Panc1 (cell line): ENCODE measurements at regions of chr6 and their contacts with region 1.

Region 1: GRCh38 chr6:34115403-34115795 is 30.5 kb downstream of the GRM4 start:
- DNase-seq: no peak
- ATAC-seq: no peak
- H3K4me3 ChIP-seq: no peak overlapping the region
- H3K27ac ChIP-seq: no peak overlapping the region
- H3K4me1 ChIP-seq: no peaks in the 10 kb centered on the region
- H3K27me3 ChIP-seq: peaks cover 3% of the 10 kb centered on the region
- CTCF ChIP-seq: no peak

Region 2: DNA sequence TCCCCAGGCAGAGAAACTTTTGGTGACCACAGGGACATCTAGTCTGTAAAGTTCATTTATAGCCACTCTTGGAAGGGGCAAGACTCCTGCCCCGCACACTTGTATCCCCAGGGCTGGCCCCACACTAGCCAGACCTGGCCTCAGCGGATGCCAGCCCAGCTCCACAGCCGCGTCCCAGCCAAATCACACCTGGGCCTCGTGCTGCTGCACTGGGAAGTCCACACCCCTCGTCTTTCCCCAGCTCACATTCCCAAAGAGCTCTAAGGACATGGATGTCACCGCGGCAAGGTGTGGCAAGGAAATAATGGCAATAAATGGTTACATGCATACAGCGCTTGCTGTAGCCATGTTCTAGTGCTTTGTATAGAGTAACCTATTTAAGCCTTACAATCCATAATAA is 377.2 kb before region 1 on chr6:
- CTCF ChIA-PET with region 1: interaction called, 11 read pairs
- POLR2A ChIA-PET with region 1: no interaction called
- in situ Hi-C with region 1: no loop called
- intact Hi-C with region 1: no loop called
- DNase-seq: no peak
- ATAC-seq: no peak
- H3K4me3 ChIP-seq: no peak overlapping the region
- H3K27ac ChIP-seq: no peak overlapping the region
- H3K4me1 ChIP-seq: no peaks in the 10 kb centered on the region
- H3K27me3 ChIP-seq: no peaks in the 10 kb centered on the region
- CTCF ChIP-seq: no peak

Region 3: GRCh38 chr6:34094474-34095135 is 20.8 kb before region 1 on chr6:
- CTCF ChIA-PET with region 1: no interaction called
- POLR2A ChIA-PET with region 1: no interaction called
- in situ Hi-C with region 1: no loop called
- intact Hi-C with region 1: no loop called
- DNase-seq: no peak
- ATAC-seq: no peak
- H3K4me3 ChIP-seq: no peak overlapping the region
- H3K27ac ChIP-seq: no peak overlapping the region
- H3K4me1 ChIP-seq: no peaks in the 10 kb centered on the region
- H3K27me3 ChIP-seq: no peaks in the 10 kb centered on the region
- CTCF ChIP-seq: no peak